CD8-positive, alpha-beta T cell (primary cell): ENCODE measurements at regions of chr16 and their contacts with region 1.

Region 1: DNA sequence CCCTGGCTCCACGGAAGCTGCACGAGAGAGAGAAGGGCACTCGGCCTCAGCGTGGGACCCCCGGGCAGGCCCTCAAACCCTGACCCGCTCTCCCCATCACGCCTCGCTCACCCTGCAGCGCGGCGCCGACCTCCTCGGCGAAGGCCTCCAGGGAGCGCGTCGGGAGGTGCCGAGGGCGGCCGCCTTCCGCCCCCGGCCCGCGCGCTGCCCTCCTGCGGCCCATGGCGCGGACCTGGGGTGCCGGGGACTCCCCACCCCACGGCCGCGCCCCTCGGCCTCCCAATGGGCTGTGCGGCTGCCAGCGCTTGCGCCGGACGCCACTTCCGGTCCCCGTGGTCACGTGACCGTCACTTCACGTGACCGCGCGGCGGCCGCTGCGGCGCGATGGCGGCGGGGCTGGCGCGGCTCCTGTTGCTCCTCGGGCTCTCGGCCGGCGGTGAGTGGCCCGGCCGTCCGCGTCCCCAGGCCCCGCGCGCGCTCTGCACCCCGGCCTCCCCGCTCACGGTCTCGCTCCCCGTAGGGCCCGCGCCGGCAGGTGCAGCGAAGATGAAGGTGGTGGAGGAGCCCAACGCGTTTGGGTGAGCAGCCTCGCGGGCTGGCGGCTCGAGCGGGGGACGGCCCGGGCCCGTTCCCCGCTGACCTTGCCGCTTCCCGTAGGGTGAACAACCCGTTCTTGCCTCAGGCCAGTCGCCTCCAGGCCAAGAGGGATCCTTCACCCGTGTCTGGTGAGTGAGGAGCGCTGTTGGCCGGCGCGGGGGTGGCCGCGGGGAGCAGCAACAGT is at the starts of genes GNPTG and TSR3:
- DNase-seq: peak; percentile 68 to 95 (median 82)
- ATAC-seq: peak; percentile 87
- H3K4me3 ChIP-seq: peak within 1 kb of the TSS; percentile 76 to 84
- H3K4me3 Mint-ChIP-seq: peak within 1 kb of the TSS; percentile 82
- H3K27ac ChIP-seq: peak within 1 kb of the TSS; percentile 39 to 50
- H3K27ac Mint-ChIP-seq: peak within 1 kb of the TSS; percentile 72
- H3K4me1 ChIP-seq: peaks cover 24% of the 10 kb centered on the region
- H3K4me1 Mint-ChIP-seq: peaks cover 35% of the 10 kb centered on the region
- H3K27me3 ChIP-seq: no peaks in the 10 kb centered on the region
- H3K27me3 Mint-ChIP-seq: no peaks in the 10 kb centered on the region
- CTCF ChIP-seq: no peak
- total RNA-seq, gene GNPTG: 30.7 to 31.9 TPM
- total RNA-seq, gene TSR3: 21.6 to 22.7 TPM

Region 2: GRCh38 chr16:1216296-1216619 is 135.5 kb before region 1 on chr16:
- CTCF ChIA-PET with region 1: no interaction called
- POLR2A ChIA-PET with region 1: no interaction called
- intact Hi-C with region 1: no loop called
- DNase-seq: no peak
- ATAC-seq: no peak
- H3K4me3 ChIP-seq: no peak overlapping the region
- H3K4me3 Mint-ChIP-seq: no peak overlapping the region
- H3K27ac ChIP-seq: no peak overlapping the region
- H3K27ac Mint-ChIP-seq: no peak overlapping the region
- H3K4me1 ChIP-seq: no peaks in the 10 kb centered on the region
- H3K4me1 Mint-ChIP-seq: no peaks in the 10 kb centered on the region
- H3K27me3 ChIP-seq: no peaks in the 10 kb centered on the region
- H3K27me3 Mint-ChIP-seq: no peaks in the 10 kb centered on the region
- CTCF ChIP-seq: no peak

Region 3: GRCh38 chr16:1378804-1379303 is 27.1 kb after region 1 on chr16:
- CTCF ChIA-PET with region 1: no interaction called
- POLR2A ChIA-PET with region 1: no interaction called
- intact Hi-C with region 1: no loop called
- DNase-seq: peak in 6 of 9 experiments; percentile 19 to 85 (median 56)
- ATAC-seq: peak; percentile 59
- H3K4me3 ChIP-seq: no peak overlapping the region
- H3K4me3 Mint-ChIP-seq: peak overlapping the region; percentile 58
- H3K27ac ChIP-seq: no peak overlapping the region
- H3K27ac Mint-ChIP-seq: peak overlapping the region; percentile 64
- H3K4me1 ChIP-seq: peaks cover 17% of the 10 kb centered on the region
- H3K4me1 Mint-ChIP-seq: peaks cover 14% of the 10 kb centered on the region
- H3K27me3 ChIP-seq: no peaks in the 10 kb centered on the region
- H3K27me3 Mint-ChIP-seq: no peaks in the 10 kb centered on the region
- CTCF ChIP-seq: no peak

Region 4: GRCh38 chr16:1408171-1408837 is 56.5 kb after region 1 on chr16:
- CTCF ChIA-PET with region 1: no interaction called
- POLR2A ChIA-PET with region 1: no interaction called
- intact Hi-C with region 1: loop called in 1 of 2 experiments (anchors 1 kb)
- DNase-seq: peak; percentile 92 to 99 (median 97)
- ATAC-seq: peak; percentile 91
- H3K4me3 ChIP-seq: peak overlapping the region; percentile 51 to 62
- H3K4me3 Mint-ChIP-seq: peak overlapping the region; percentile 75
- H3K27ac ChIP-seq: peak overlapping the region in 1 of 2 experiments; percentile 58
- H3K27ac Mint-ChIP-seq: no peak overlapping the region
- H3K4me1 ChIP-seq: peaks cover 22% of the 10 kb centered on the region
- H3K4me1 Mint-ChIP-seq: peaks cover 32% of the 10 kb centered on the region
- H3K27me3 ChIP-seq: no peaks in the 10 kb centered on the region
- H3K27me3 Mint-ChIP-seq: no peaks in the 10 kb centered on the region
- CTCF ChIP-seq: no peak